ENCODE measurements at regions of chr11 and their contacts with region 1.

Region 1: DNA sequence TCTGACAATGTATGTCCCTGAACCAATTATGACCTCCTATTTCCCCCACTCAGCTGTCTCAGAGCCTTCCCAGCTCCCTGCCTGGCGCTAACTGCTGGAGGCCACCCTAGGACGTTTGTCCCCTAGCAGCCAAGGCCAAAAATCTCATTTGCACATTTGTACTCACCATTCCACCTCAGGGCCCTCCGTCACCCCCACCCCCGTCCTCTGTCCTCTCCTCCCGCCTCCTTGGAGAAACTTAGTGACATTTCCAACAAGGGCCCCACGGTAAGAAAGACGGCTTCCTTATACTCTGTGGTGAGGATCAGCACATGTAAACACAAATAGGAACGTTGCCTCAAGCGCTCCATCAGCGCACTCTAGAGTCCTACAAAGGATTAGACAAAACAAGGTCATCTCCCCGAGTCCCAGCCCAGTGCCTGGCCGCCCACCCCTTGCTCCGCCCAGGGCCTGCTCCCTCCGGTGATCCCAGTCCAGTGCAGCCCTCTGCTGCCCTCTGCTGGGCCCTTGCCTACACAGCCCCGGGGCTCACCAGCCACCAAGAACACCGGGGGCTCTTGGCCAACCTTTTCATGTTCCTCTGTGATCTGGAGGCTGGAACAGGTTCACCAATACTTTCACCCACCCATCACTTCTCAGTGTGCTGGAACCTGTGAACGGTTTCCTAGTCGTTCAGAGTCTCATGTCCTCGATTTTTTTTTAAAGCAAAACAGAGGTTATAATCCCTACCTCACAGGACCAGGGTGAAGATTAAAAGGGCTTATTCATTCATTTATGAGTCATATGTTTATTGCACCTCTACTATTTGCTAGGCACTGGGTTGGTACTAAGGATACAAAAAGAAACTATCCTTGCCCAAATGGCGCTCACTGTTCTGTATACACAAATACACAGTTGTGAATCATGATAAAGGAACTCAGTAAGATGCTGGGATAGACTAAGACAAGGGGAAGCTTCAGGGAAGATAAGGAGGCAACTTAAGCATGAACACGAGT is 15.3 kb upstream of the CTR9 start:
- DNase-seq: peak; percentile 93 to 96 (median 94)
- ATAC-seq: peak; percentile 99
- H3K4me3 ChIP-seq: no peak overlapping the region
- H3K4me1 ChIP-seq: peaks cover 8% of the 10 kb centered on the region
- CTCF ChIP-seq: peak; percentile 93

Region 2: DNA sequence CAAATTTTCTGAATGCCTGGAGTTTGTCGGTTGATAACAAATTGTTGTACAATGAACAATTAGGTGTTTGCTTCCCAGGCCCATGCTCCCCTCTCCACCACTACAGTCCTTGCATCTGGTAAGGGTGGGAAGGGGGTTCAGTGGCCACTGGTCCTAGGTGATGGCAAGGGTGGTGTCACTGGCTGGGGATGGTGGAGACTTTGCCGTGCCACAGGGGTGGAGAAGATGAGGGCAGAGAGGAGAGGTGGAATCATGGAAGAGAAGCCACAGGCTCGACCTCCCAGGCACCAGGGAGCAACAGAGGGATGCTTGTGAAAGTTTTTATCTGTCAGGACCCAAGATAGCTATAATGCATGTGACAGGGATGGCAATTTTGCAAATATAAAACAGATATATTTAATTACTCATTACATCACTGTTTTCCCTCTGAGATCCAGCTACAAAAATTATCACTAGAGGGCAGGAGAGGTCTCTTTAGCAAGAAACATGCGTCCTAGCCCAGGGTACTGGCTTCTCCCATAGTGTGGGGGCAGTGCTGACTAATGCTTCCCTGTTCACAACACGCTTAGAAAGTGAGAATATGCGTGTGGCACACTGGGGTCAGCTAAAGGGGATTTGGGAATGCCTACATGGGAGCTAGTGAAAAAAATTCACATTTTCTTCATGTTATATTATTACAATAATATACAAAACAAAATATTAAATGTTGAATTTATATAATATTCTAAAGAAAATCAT is 329.8 kb before region 1 on chr11:
- intact Hi-C with region 1: loop called (anchors 5 kb)
- DNase-seq: peak in 1 of 3 donors; percentile 70
- ATAC-seq: peak; percentile 84
- H3K4me3 ChIP-seq: no peak overlapping the region
- H3K4me1 ChIP-seq: no peaks in the 10 kb centered on the region
- CTCF ChIP-seq: no peak

Region 3: GRCh38 chr11:10514210-10514609 is 221.6 kb before region 1 on chr11:
- intact Hi-C with region 1: loop called in 1 of 2 experiments (anchors 10 kb)
- DNase-seq: no peak
- ATAC-seq: no peak
- H3K4me3 ChIP-seq: no peak overlapping the region
- H3K4me1 ChIP-seq: no peaks in the 10 kb centered on the region
- CTCF ChIP-seq: no peak